AG04450 (cell line): ENCODE measurements at regions of chr1 and their contacts with region 1.

Region 1: GRCh38 chr1:46340404-46341221 is at the start of gene NSUN4:
- DNase-seq: peak; percentile 88
- H3K4me3 ChIP-seq: peak within 1 kb of the TSS; percentile 88
- H3K27ac ChIP-seq: peak within 1 kb of the TSS; percentile 98
- H3K27me3 ChIP-seq: no peaks in the 10 kb centered on the region
- CTCF ChIP-seq: peak; percentile 67
- polyA plus RNA-seq, gene NSUN4: 18.4 and 21.4 TPM in 2 replicates

Region 2: GRCh38 chr1:46247436-46248121 is 93.0 kb before region 1 on chr1 and contains the start of gene RAD54L:
- CTCF ChIA-PET with region 1: interaction called, 37 read pairs
- POLR2A ChIA-PET with region 1: no interaction called
- DNase-seq: peak; percentile 98
- H3K4me3 ChIP-seq: peak within 1 kb of the TSS; percentile 92
- H3K27ac ChIP-seq: peak within 1 kb of the TSS; percentile 83
- H3K27me3 ChIP-seq: no peaks in the 10 kb centered on the region
- CTCF ChIP-seq: no peak
- polyA plus RNA-seq, gene RAD54L: 1.8 and 1.9 TPM in 2 replicates

Region 3: GRCh38 chr1:46303038-46303871 is 37.4 kb before region 1 on chr1 and contains the starts of genes LRRC41 and UQCRH:
- CTCF ChIA-PET with region 1: interaction called, 12 read pairs
- POLR2A ChIA-PET with region 1: interaction called, 17 read pairs
- DNase-seq: peak; percentile 95
- H3K4me3 ChIP-seq: peak within 1 kb of the TSS; percentile 86
- H3K27ac ChIP-seq: peak within 1 kb of the TSS; percentile 95
- H3K27me3 ChIP-seq: no peaks in the 10 kb centered on the region
- CTCF ChIP-seq: no peak
- polyA plus RNA-seq, gene LRRC41: 66.3 and 80.2 TPM in 2 replicates
- polyA plus RNA-seq, gene UQCRH: 611 and 757 TPM in 2 replicates